GM12878 (cell line): ENCODE measurements at regions of chr13 and their contacts with region 1.

Region 1: GRCh38 chr13:80363890-80364503 is 23.1 kb upstream of the SPRY2 start:
- DNase-seq: no peak
- ATAC-seq: no peak
- H3K4me3 ChIP-seq: no peak overlapping the region
- H3K27ac ChIP-seq: no peak overlapping the region
- H3K4me1 ChIP-seq: no peaks in the 10 kb centered on the region
- H3K27me3 ChIP-seq: no peaks in the 10 kb centered on the region
- CTCF ChIP-seq: peak; percentile 62 to 70 (median 62); a peak in 5 of 6 replicates
- EP300 ChIP-seq: no peak
- POLR2A ChIP-seq: no peak
- RAD21 ChIP-seq: peak; percentile 80

Region 2: GRCh38 chr13:79782541-79783205 is 581.3 kb before region 1 on chr13:
- CTCF ChIA-PET with region 1: interaction called, 3 read pairs
- POLR2A ChIA-PET with region 1: no interaction called
- RAD21 ChIA-PET with region 1: interaction called, 8 read pairs
- SMC1A ChIA-PET with region 1: interaction called, 4 read pairs
- in situ Hi-C with region 1: loop called (anchors 5 kb)
- intact Hi-C with region 1: loop called (anchors 2 kb)
- DNase-seq: no peak
- ATAC-seq: peak; percentile 88
- H3K4me3 ChIP-seq: no peak overlapping the region
- H3K27ac ChIP-seq: no peak overlapping the region
- H3K4me1 ChIP-seq: no peaks in the 10 kb centered on the region
- H3K27me3 ChIP-seq: no peaks in the 10 kb centered on the region
- CTCF ChIP-seq: no peak
- EP300 ChIP-seq: peak in 1 of 2 experiments; percentile 62; a peak in 1 of 4 replicates
- POLR2A ChIP-seq: no peak
- RAD21 ChIP-seq: no peak

Region 3: DNA sequence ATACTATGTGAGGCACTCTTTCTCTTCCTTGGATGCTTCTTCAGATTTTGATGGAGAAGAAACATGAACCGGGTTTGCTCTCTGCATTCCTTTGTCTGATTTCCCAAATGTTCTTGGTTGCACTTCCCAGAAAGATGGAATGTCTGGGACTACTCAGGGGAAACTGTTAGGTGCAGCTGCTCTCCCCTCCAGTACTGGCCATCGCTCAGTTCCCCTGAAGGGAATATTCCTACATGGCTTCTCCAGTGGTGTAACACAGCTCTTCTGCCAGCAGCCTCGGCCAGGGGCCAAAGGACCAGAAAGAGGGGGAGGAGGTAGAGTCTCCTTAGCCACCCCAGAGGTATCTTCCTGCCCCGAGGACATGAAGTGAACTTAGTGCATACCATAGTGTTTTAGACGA is 10.4 kb after region 1 on chr13:
- CTCF ChIA-PET with region 1: interaction called, 7 read pairs
- POLR2A ChIA-PET with region 1: interaction called, 3 read pairs
- RAD21 ChIA-PET with region 1: no interaction called
- SMC1A ChIA-PET with region 1: interaction called, 11 read pairs
- in situ Hi-C with region 1: no loop called
- intact Hi-C with region 1: no loop called
- DNase-seq: no peak
- ATAC-seq: no peak
- H3K4me3 ChIP-seq: no peak overlapping the region
- H3K27ac ChIP-seq: no peak overlapping the region
- H3K4me1 ChIP-seq: no peaks in the 10 kb centered on the region
- H3K27me3 ChIP-seq: no peaks in the 10 kb centered on the region
- CTCF ChIP-seq: no peak
- EP300 ChIP-seq: no peak
- POLR2A ChIP-seq: no peak
- RAD21 ChIP-seq: no peak

Region 4: DNA sequence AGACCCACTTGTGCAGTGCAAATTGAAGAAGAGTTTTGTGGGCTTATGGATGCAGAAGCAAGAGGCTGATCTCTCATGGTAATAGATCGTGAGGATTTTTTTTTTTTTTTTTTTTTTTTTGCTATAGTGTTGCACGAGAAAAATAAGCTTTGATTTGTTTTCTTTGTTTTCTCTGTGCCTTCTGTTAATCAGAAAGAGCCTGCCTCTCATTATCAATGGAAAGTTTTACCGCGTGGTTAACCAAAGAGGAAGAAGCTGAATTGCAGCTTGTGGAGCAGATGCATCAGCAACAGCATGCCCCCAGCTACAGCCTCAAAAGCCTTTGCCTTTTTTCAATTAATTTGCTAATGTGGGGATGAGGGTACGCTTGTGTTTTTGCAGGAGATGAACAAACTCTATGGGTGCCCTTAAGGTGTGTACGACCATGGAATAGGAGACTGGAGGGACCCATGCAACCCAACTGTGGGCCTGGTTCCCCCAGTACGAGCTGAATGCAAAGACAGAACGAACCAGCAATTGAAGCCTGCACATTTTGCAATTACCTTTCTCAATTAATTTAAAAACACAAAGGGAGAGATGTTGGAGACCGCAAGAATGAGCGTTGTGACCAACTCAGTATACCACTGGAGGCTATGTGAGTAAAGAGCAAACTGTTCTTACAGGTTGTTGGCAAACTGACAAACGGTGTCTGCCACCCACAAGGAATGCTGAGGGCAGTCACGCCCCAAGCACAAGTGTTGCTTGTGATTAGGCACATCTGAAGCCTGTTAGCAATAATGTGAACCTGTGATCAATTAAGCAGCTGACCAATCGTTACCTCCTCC is 35.6 kb after region 1 on chr13:
- CTCF ChIA-PET with region 1: interaction called, 24 read pairs
- POLR2A ChIA-PET with region 1: interaction called, 6 read pairs
- RAD21 ChIA-PET with region 1: interaction called, 49 read pairs
- SMC1A ChIA-PET with region 1: interaction called, 39 read pairs
- in situ Hi-C with region 1: no loop called
- intact Hi-C with region 1: no loop called
- DNase-seq: peak; percentile 17
- ATAC-seq: peak; percentile 62
- H3K4me3 ChIP-seq: no peak overlapping the region
- H3K27ac ChIP-seq: no peak overlapping the region
- H3K4me1 ChIP-seq: no peaks in the 10 kb centered on the region
- H3K27me3 ChIP-seq: no peaks in the 10 kb centered on the region
- CTCF ChIP-seq: no peak
- EP300 ChIP-seq: peak; percentile 13 to 56; a peak in 3 of 4 replicates
- POLR2A ChIP-seq: no peak
- RAD21 ChIP-seq: no peak

Region 5: GRCh38 chr13:80477661-80478443 is 113.9 kb after region 1 on chr13:
- CTCF ChIA-PET with region 1: interaction called, 4 read pairs
- POLR2A ChIA-PET with region 1: no interaction called
- RAD21 ChIA-PET with region 1: interaction called, 4 read pairs
- SMC1A ChIA-PET with region 1: interaction called, 10 read pairs
- in situ Hi-C with region 1: no loop called
- intact Hi-C with region 1: no loop called
- DNase-seq: no peak
- ATAC-seq: peak; percentile 80
- H3K4me3 ChIP-seq: no peak overlapping the region
- H3K27ac ChIP-seq: no peak overlapping the region
- H3K4me1 ChIP-seq: no peaks in the 10 kb centered on the region
- H3K27me3 ChIP-seq: no peaks in the 10 kb centered on the region
- CTCF ChIP-seq: no peak
- EP300 ChIP-seq: peak; percentile 93 to 96
- POLR2A ChIP-seq: no peak
- RAD21 ChIP-seq: no peak